ENCODE measurements at regions of chr12 and their contacts with region 1.

Region 1: GRCh38 chr12:109393437-109394345 is 46.0 kb downstream of the MYO1H start:
- DNase-seq: peak; percentile 36
- ATAC-seq: peak; percentile 61
- H3K4me3 Mint-ChIP-seq: no peak overlapping the region
- H3K27ac Mint-ChIP-seq: no peak overlapping the region
- H3K4me1 Mint-ChIP-seq: no peaks in the 10 kb centered on the region
- H3K27me3 Mint-ChIP-seq: peaks cover 31% of the 10 kb centered on the region

Region 2: DNA sequence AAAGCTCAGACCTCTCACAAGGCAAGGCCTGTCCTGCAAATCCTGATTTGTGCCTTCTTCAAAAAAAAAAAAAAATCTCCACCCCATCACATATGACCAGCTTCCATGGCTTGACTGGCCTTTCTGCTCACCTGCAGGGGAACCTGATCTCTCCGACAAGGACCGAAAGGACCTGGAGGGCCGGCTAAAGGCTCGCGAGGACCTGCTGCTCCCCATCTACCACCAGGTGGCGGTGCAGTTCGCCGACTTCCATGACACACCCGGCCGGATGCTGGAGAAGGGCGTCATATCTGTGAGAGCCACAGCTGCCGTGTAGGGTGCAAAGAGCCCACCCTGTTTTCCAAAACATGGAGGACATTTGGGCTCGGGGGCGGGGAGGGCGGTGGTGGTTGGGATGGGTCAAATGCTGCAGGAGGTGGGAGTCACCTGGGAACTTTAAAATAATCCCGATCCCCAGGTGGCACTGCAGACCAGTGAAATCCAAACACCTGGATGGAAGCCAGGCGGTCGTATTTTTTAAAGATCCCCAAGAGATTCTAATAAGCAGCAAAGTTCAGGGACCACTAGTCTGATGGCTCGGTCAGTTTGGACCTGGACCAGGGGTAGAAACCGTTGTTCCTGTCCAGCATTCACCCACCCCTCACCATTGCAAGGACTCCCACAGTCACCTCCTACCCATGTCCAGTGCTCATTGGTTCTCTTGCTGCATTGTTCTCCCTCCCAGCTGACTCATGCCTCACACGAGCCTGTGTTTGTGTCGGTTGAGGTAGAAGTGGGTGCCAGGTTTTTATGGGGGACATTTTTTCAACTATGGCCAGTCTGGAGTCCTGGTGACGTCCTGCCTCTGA is 129.4 kb before region 1 on chr12:
- CTCF ChIA-PET with region 1: interaction called, 9 read pairs
- POLR2A ChIA-PET with region 1: no interaction called
- intact Hi-C with region 1: loop called in 1 of 2 experiments (anchors 2 kb)
- DNase-seq: peak; percentile 77
- ATAC-seq: peak; percentile 42
- H3K4me3 Mint-ChIP-seq: no peak overlapping the region
- H3K27ac Mint-ChIP-seq: no peak overlapping the region
- H3K4me1 Mint-ChIP-seq: no peaks in the 10 kb centered on the region
- H3K27me3 Mint-ChIP-seq: no peaks in the 10 kb centered on the region